ENCODE measurements at regions of chr1 and their contacts with region 1.

Region 1: DNA sequence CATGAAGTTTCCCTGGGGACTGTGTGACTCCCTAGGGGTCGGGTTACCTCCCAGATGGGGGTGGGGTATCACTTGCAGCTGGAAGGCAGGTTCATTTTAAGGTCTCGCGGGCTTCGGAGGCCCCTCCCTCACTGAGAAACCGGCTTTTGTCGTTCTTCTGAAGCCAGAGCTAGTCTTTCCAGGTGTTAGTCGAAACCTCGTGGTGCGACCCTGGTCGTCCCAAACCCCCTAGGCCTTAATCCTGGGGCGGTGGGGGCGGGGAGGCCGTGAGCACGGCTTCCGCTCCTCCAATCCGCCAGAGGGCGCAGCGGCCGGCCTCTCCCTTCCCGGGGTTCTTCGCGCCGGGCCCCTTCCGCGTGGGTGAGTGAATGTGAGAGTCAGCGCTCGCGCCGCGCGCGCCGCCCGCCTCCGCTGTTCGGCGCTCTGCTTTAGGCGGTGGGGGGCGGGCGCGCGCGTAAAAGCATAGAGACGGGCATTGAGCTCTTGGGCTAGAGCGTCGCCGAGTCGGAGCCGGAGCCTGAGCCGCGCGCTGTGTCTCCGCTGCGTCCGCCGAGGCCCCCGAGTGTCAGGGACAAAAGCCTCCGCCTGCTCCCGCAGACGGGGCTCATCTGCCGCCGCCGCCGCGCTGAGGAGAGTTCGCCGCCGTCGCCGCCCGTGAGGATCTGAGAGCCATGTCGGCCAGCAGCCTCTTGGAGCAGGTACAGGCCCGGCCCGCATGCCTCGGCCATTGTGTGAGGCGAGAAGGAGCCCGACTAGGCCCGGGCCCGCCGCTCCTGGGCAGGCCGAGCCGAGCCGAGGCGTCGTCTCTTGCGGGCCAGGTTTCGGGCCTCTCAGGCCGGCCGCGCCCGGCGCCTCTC is at the start of gene YTHDF2:
- DNase-seq: peak; percentile 98 to 99 (median 99)
- H3K4me3 ChIP-seq: peak within 1 kb of the TSS; percentile 89 to 97 (median 93)
- H3K27ac ChIP-seq: peak within 1 kb of the TSS; percentile 86 to 96
- H3K4me1 ChIP-seq: peaks cover 10 to 35% (median 25%) of the 10 kb centered on the region in 4 experiments
- H3K27me3 ChIP-seq: no peaks in the 10 kb centered on the region

Region 2: GRCh38 chr1:28642847-28643635 is 93.6 kb before region 1 on chr1 and contains the start of gene TAF12:
- CTCF ChIA-PET with region 1: interaction called, 12 read pairs
- POLR2A ChIA-PET with region 1: interaction called, 21 read pairs
- DNase-seq: peak; percentile 97 to 98 (median 98)
- H3K4me3 ChIP-seq: peak within 1 kb of the TSS; percentile 77 to 100 (median 95)
- H3K27ac ChIP-seq: peak within 1 kb of the TSS; percentile 88 to 93
- H3K4me1 ChIP-seq: peaks cover 10 to 43% (median 29%) of the 10 kb centered on the region in 4 experiments
- H3K27me3 ChIP-seq: no peaks in the 10 kb centered on the region

Region 3: GRCh38 chr1:28648474-28649198 is 88.0 kb before region 1 on chr1 and contains the start of gene RNU11:
- CTCF ChIA-PET with region 1: interaction called, 12 read pairs
- POLR2A ChIA-PET with region 1: interaction called, 21 read pairs
- DNase-seq: peak; percentile 98 to 99 (median 99)
- H3K4me3 ChIP-seq: peak within 1 kb of the TSS; percentile 7 to 79 (median 57)
- H3K27ac ChIP-seq: peak within 1 kb of the TSS; percentile 100
- H3K4me1 ChIP-seq: peaks cover 4 to 30% (median 24%) of the 10 kb centered on the region in 4 experiments
- H3K27me3 ChIP-seq: no peaks in the 10 kb centered on the region

Region 4: DNA sequence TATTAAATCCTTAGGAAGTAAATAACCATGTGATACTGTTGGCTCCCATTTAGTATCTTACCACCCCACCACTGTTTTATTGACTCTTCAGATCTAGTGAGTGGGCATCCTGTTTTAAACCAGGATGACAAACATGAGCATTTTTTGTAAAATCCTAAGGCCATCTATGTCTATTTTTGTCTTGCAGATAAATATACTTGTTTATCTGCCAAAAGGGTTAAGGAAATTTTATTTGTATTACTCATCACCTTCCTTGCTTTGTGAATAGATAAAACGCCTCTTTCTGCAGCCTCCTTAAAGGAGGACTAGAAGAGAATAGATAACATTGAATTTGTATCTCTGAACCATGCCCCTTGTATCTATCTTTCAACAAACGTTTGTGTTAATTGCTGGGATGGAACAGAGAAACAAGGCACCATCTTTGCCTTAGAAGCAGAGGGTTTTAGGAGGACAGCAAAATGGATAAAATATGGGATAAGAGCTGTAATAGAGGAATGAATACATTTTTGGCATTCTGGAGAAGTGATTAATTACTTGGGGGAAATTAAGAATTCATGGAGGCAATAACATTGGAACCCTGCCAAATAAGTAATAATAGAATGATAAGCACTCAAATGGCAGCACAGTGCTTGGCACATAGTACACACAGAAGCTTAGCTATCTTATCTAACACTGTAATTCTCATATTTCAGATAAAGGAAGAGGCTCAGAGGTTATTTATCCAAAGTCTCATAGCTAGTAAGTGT is 14.8 kb after region 1 on chr1:
- CTCF ChIA-PET with region 1: interaction called, 10 read pairs
- POLR2A ChIA-PET with region 1: interaction called, 7 read pairs
- DNase-seq: no peak
- H3K4me3 ChIP-seq: no peak overlapping the region
- H3K27ac ChIP-seq: no peak overlapping the region
- H3K4me1 ChIP-seq: peaks cover 0 to 32% (median 16%) of the 10 kb centered on the region in 4 experiments
- H3K27me3 ChIP-seq: no peaks in the 10 kb centered on the region